ENCODE measurements at regions of chr6 and their contacts with region 1.

Region 1: DNA sequence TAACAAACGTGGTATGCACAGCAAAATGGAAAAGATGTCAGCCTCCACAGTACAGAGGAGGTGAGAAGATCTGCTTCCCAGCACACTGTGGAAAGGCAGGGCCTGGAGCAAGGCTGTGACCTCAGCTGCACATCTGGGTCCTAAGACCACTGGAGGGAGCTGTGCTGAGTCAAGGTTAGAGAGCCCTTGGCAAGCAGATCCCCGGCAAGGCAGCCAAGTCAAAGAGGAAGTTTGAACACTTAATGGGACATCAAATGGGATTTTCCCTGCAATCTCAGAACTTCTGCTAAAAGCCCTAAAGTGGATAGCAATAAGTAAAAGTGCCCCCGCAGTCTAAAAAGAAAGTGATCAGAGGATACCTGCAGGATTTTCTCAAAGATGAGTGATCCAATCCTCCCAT is 39.5 kb downstream of the UNC5CL start:
- DNase-seq: peak; percentile 72
- ATAC-seq: peak; percentile 76
- H3K4me3 Mint-ChIP-seq: peak overlapping the region; percentile 22; the same call in 1 of the 2 replicates
- H3K27ac Mint-ChIP-seq: peak overlapping the region; percentile 44; the same call in 1 of the 2 replicates
- H3K4me1 Mint-ChIP-seq: peaks cover 64% of the 10 kb centered on the region
- H3K27me3 Mint-ChIP-seq: peaks cover 16% of the 10 kb centered on the region; the same call in 1 of the 2 replicates
- CTCF ChIP-seq: no peak

Region 2: DNA sequence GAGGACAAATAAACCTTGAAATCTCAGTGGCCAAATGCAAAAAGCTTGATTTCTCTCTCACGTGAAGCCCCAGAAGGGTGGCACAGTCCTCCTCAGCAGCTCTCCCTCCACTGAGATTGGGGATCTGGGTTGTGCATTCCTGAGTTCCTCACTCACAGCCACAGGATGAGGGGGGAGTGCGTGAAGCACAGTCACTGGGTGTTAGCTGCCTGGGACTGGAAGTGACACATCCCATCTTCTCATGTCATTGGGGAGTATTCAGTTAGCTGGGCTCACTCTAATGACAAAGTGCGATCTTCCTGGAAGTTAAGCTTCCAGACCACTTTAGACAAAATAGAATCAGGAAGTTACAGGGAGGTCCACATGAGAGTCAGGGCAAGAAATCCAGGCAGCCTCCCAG is 220.2 kb before region 1 on chr6:
- CTCF ChIA-PET with region 1: no interaction called
- POLR2A ChIA-PET with region 1: no interaction called
- DNase-seq: no peak
- ATAC-seq: no peak
- H3K4me3 Mint-ChIP-seq: no peak overlapping the region
- H3K27ac Mint-ChIP-seq: no peak overlapping the region
- H3K4me1 Mint-ChIP-seq: no peaks in the 10 kb centered on the region
- H3K27me3 Mint-ChIP-seq: no peaks in the 10 kb centered on the region
- CTCF ChIP-seq: no peak

Region 3: DNA sequence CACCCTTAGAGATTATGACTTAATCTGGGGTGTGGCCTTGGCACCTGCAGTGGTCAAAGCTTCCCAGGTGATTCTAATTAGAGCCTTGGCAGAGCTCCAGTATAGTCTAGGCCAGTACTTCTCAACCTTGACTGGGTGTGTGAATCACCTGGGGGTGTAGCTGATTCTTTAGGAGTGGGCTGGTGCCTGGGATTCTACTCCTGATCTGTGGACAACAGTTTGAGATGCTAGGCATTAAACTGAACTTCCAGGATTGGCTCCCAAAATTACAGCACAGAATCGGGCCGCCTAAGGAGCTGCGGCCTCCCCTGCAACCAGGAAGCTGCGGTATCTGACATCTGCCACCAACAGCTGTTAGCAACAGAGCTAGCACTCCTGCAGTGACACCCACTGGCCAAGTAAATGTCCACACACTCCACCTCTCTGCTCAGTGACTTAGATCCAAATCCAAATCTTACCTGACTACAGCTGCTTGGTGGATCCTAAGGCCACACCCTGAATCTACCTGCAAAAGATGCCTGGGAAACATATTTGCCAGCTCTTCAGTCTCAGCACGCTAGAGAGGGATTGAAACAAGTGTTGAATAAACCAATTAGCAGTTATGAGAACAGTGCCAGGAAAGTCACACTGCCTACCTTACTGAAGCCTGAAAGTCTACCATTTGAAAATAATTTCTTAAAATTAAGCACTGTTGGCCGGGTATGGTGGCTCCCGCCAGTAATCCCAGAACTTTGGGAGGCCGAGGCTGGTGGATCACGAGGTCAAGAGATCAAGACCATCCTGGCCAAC is 87.2 kb before region 1 on chr6:
- CTCF ChIA-PET with region 1: interaction called, 18 read pairs
- POLR2A ChIA-PET with region 1: no interaction called
- DNase-seq: peak; percentile 53
- ATAC-seq: peak; percentile 97
- H3K4me3 Mint-ChIP-seq: no peak overlapping the region
- H3K27ac Mint-ChIP-seq: no peak overlapping the region
- H3K4me1 Mint-ChIP-seq: peaks cover 8% of the 10 kb centered on the region
- H3K27me3 Mint-ChIP-seq: peaks cover 45% of the 10 kb centered on the region
- CTCF ChIP-seq: no peak

Region 4: DNA sequence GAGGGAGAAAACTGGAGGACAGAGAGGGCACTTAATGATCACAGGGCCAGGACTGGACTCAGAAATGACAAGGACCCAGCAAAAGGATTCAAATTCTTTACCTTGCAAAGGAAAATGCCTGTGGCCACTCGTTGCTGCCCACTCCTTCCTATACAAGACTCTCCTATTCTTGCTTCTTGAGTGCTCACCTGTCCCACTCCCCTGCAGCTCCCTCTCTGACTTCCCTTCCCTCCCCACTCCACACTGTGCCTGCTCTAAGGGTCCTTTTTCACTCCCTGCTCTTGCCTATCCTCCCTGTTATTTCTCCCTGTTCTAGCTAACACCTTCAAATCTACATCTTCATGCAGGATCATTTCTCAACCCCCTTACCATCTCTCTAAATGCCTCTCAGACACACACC is 16.7 kb before region 1 on chr6:
- CTCF ChIA-PET with region 1: interaction called, 10 read pairs
- POLR2A ChIA-PET with region 1: no interaction called
- DNase-seq: no peak
- ATAC-seq: peak; percentile 41; the same call in 1 of the 2 replicates
- H3K4me3 Mint-ChIP-seq: no peak overlapping the region
- H3K27ac Mint-ChIP-seq: no peak overlapping the region; the same call in 1 of the 2 replicates
- H3K4me1 Mint-ChIP-seq: peaks cover 26% of the 10 kb centered on the region
- H3K27me3 Mint-ChIP-seq: no peaks in the 10 kb centered on the region
- CTCF ChIP-seq: no peak

Measured in WTC11 (cell line).